PC-3 (cell line): ENCODE measurements at regions of chr7 and their contacts with region 1.

Region 1: DNA sequence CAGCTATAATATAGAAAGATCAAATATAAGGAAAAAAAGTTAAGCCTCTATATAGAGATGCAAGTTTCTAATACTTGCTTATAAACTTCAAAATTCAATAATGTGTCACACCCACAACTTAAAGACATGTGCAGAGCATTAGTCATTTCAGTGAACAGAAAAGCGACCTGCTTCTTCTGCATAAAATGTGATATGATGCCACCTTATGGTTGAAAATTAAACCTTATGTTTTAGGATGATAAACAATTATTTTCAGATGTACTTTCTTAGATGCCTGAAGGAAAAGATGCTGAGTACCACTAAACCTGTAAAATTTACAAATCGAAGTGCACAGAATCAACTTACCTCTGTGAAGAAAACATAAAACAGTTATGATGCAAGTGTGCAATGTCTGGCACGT is 96.0 kb downstream of the MTERF1 start:
- DNase-seq: peak; percentile 83
- ATAC-seq: peak; percentile 92
- H3K4me3 ChIP-seq: no peak overlapping the region
- H3K27ac ChIP-seq: no peak overlapping the region
- H3K4me1 ChIP-seq: 0 out of 2 replicates have a peak, but pooled peaks cover 5% of the 10 kb centered on the region
- H3K27me3 ChIP-seq: no peaks in the 10 kb centered on the region
- CTCF ChIP-seq: peak; percentile 77

Region 2: GRCh38 chr7:91089382-91089963 is 695.0 kb before region 1 on chr7:
- CTCF ChIA-PET with region 1: no interaction called
- POLR2A ChIA-PET with region 1: no interaction called
- intact Hi-C with region 1: loop called (anchors 1 kb)
- DNase-seq: peak; percentile 40
- ATAC-seq: peak; percentile 67
- H3K4me3 ChIP-seq: peak overlapping the region; percentile 38; the same call in 1 of the 2 replicates
- H3K27ac ChIP-seq: no peak overlapping the region
- H3K4me1 ChIP-seq: no peaks in the 10 kb centered on the region
- H3K27me3 ChIP-seq: no peaks in the 10 kb centered on the region
- CTCF ChIP-seq: peak; percentile 88

Region 3: GRCh38 chr7:91288208-91288824 is 496.1 kb before region 1 on chr7:
- CTCF ChIA-PET with region 1: no interaction called
- POLR2A ChIA-PET with region 1: no interaction called
- intact Hi-C with region 1: loop called (anchors 2 kb)
- DNase-seq: peak; percentile 53
- ATAC-seq: peak; percentile 53; the same call in 1 of the 2 replicates
- H3K4me3 ChIP-seq: no peak overlapping the region
- H3K27ac ChIP-seq: no peak overlapping the region
- H3K4me1 ChIP-seq: no peaks in the 10 kb centered on the region; the same call in 1 of the 2 replicates
- H3K27me3 ChIP-seq: no peaks in the 10 kb centered on the region
- CTCF ChIP-seq: peak; percentile 65

Region 4: DNA sequence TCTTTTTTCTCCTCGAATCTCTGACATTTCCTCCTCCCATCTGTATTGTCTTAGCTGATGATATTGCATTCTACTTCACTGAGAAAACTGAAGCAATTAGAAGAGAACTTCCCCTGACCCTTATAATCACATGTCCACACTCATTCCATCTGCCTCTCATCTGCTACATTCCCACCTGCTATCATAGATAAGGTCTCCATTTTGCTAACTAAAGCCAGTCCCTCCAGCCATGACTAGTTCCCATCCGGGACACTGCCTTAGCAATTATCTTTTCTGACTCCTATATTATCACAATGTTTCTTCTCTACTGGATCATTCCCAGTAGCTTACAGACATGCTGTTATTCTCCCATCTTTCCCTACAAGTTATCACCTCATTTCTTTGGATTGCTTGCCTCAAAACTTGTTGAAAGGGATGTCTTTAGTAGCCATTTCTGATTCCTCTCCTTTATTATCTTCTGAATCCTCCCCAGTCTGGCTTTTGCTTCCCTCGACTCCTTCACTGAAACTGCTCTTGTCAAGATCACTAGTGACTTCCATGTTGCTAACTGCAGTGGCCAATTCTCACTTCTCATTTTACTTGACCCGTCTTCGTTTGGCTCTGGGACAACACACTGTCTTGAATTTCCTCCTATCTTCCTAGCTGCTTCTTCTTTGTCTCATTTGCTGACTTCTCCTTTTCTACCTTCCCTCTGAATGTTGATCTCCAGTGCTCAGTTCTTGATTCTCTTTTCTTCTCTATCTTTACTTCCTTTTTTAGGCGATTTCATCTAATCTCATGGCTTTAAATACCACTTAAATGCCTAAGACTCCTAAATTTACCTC is 484.3 kb before region 1 on chr7:
- CTCF ChIA-PET with region 1: no interaction called
- POLR2A ChIA-PET with region 1: no interaction called
- intact Hi-C with region 1: no loop called
- DNase-seq: no peak
- ATAC-seq: no peak
- H3K4me3 ChIP-seq: no peak overlapping the region
- H3K27ac ChIP-seq: no peak overlapping the region
- H3K4me1 ChIP-seq: no peaks in the 10 kb centered on the region
- H3K27me3 ChIP-seq: peaks cover 32% of the 10 kb centered on the region
- CTCF ChIP-seq: no peak

Region 5: DNA sequence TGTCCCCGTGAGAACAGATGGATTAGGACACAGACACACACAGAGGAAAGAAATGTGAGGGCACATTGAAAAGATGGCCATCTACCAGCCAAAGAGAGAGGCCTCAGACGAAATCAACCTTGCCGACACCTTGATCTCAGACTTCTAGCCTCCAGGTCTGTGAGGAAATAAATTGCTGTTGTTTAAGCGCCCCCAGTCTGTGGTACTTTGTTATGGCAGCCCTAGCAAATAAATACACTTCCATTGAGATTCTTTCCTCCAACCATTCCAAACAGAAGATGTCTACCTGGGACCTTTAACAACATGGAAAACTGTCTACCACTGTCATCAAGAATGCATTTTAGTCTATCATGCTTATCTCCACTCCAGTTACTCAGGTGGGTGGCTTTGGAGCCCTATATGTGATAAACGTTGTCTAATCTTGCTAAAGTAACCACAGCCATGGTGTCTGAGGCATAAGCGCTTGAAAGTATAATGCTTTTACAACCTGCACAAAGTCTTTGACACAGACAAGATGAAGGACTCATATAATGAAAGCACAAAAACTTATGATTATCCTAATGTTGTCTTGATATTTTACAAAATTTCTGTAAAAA is 148.2 kb before region 1 on chr7:
- CTCF ChIA-PET with region 1: no interaction called
- POLR2A ChIA-PET with region 1: no interaction called
- intact Hi-C with region 1: loop called (anchors 1 kb)
- DNase-seq: peak; percentile 57
- ATAC-seq: peak; percentile 68
- H3K4me3 ChIP-seq: no peak overlapping the region
- H3K27ac ChIP-seq: no peak overlapping the region
- H3K4me1 ChIP-seq: peaks cover 10% of the 10 kb centered on the region
- H3K27me3 ChIP-seq: no peaks in the 10 kb centered on the region
- CTCF ChIP-seq: peak; percentile 71

Region 6: DNA sequence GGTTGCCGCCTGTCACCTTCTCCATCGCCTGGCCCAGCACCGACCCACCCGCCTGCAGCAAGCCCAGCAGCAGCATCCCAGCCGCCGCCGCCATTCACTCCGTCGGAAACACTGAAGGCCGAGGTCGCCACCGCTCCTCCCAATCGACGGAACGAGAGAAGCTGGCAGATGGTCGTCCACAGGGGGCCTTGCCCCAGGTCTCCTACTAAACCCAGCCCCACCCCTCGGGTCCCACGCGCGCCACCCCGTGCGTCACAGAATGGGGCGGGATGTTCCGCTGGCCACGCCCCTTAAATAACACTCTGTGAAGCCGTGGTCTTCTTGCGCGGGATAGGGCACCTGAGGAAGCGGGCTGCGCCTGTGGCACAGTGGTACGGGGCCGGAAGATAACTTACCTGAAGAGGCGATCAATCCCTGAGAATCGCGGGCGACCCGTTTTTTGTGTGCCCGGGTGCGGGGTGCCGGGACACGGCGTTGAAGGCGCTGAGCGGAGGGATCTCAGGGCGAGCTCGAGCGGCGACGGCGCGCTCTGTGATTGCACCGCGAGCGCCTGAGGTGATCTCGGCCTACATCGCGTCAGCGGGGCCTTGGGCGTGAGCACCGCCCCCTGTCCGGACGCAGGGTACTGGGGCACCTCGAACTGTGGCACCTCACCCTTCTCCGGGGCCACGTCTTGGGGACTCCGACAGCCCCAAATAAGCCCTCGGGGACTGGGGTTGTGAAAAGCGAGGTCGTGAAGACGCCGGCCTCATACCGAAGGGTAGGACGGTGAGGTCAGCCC is 350.0 kb after region 1 on chr7 and contains the start of gene CYP51A1:
- CTCF ChIA-PET with region 1: no interaction called
- POLR2A ChIA-PET with region 1: no interaction called
- intact Hi-C with region 1: no loop called
- DNase-seq: peak; percentile 84
- ATAC-seq: peak; percentile 86
- H3K4me3 ChIP-seq: peak within 1 kb of the TSS; percentile 82
- H3K27ac ChIP-seq: peak within 1 kb of the TSS; percentile 88
- H3K4me1 ChIP-seq: peaks cover 22% of the 10 kb centered on the region; the same call in 1 of the 2 replicates
- H3K27me3 ChIP-seq: no peaks in the 10 kb centered on the region
- CTCF ChIP-seq: no peak
- total RNA-seq, gene CYP51A1: 52.3 and 58.3 TPM in 2 replicates